Naive thymus-derived CD4-positive, alpha-beta T cell (primary cell): ENCODE measurements at regions of chr6 and their contacts with region 1.

Region 1: GRCh38 chr6:15491255-15491985 is 171.4 kb downstream of the DTNBP1 start:
- DNase-seq: peak; percentile 48 to 77 (median 70)
- ATAC-seq: peak; percentile 88
- H3K4me3 ChIP-seq: no peak overlapping the region
- H3K4me3 Mint-ChIP-seq: peak overlapping the region in 6 of 10 donors; percentile 2 to 17 (median 3)
- H3K27ac ChIP-seq: peak overlapping the region; percentile 2
- H3K27ac Mint-ChIP-seq: peak overlapping the region; percentile 29 to 88 (median 67)
- H3K4me1 ChIP-seq: peaks cover 0 to 11% of the 10 kb centered on the region in 2 donors
- H3K4me1 Mint-ChIP-seq: peaks cover 24 to 58% (median 41%) of the 10 kb centered on the region in 7 donors
- H3K27me3 ChIP-seq: no peaks in the 10 kb centered on the region
- H3K27me3 Mint-ChIP-seq: no peaks in the 10 kb centered on the region

Region 2: DNA sequence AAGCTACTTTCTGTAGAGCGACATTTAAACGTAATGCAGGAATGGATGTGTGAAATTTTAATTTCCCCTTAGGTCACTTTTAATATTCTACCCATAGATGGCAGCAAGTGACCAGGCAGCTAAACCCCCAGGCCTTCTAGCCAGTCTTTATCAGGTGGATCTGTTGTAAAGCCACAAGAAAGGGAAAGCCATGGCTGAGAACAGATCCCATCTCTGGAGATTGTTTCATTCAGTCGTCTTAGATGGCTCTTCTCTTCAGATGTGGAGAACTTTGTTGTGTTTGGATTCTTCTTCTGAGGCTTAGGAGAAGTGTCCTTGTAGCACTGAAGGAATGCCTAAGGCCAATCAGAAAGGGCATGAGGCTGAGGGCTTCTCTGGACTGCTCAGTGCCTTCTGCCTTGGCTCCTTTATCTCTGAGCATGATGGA is 1582.5 kb before region 1 on chr6:
- CTCF ChIA-PET with region 1: no interaction called
- POLR2A ChIA-PET with region 1: no interaction called
- intact Hi-C with region 1: loop called in 1 of 2 experiments (anchors 1 kb)
- DNase-seq: peak in 7 of 9 donors; percentile 22 to 56 (median 36)
- ATAC-seq: peak; percentile 92
- H3K4me3 ChIP-seq: no peak overlapping the region
- H3K4me3 Mint-ChIP-seq: no peak overlapping the region
- H3K27ac ChIP-seq: no peak overlapping the region
- H3K27ac Mint-ChIP-seq: no peak overlapping the region
- H3K4me1 ChIP-seq: peaks cover 0 to 5% of the 10 kb centered on the region in 2 donors
- H3K4me1 Mint-ChIP-seq: peaks cover 0 to 8% (median 3%) of the 10 kb centered on the region in 7 donors
- H3K27me3 ChIP-seq: no peaks in the 10 kb centered on the region
- H3K27me3 Mint-ChIP-seq: peaks cover 24 to 51% (median 39%) of the 10 kb centered on the region in 5 donors

Region 3: GRCh38 chr6:14129575-14129974 is 1361.8 kb before region 1 on chr6:
- CTCF ChIA-PET with region 1: interaction called, 8 read pairs
- POLR2A ChIA-PET with region 1: no interaction called
- intact Hi-C with region 1: loop called in 1 of 2 experiments (anchors 1 kb)
- DNase-seq: peak in 5 of 9 donors; percentile 28 to 57 (median 45)
- ATAC-seq: peak; percentile 55
- H3K4me3 ChIP-seq: no peak overlapping the region
- H3K4me3 Mint-ChIP-seq: no peak overlapping the region
- H3K27ac ChIP-seq: no peak overlapping the region
- H3K27ac Mint-ChIP-seq: peak overlapping the region in 2 of 9 donors; percentile 12 to 51
- H3K4me1 ChIP-seq: no peaks in the 10 kb centered on the region
- H3K4me1 Mint-ChIP-seq: peaks cover 2 to 21% (median 11%) of the 10 kb centered on the region in 7 donors
- H3K27me3 ChIP-seq: no peaks in the 10 kb centered on the region
- H3K27me3 Mint-ChIP-seq: no peaks in the 10 kb centered on the region

Region 4: GRCh38 chr6:15621203-15622044 is 130.0 kb after region 1 on chr6:
- CTCF ChIA-PET with region 1: interaction called, 3 read pairs
- POLR2A ChIA-PET with region 1: no interaction called
- intact Hi-C with region 1: loop called (anchors 1 kb)
- DNase-seq: peak in 1 of 9 donors; percentile 34
- ATAC-seq: peak; percentile 86
- H3K4me3 ChIP-seq: no peak overlapping the region
- H3K4me3 Mint-ChIP-seq: peak overlapping the region in 1 of 10 donors; percentile 5
- H3K27ac ChIP-seq: no peak overlapping the region
- H3K27ac Mint-ChIP-seq: peak overlapping the region in 2 of 9 donors; percentile 3 to 52
- H3K4me1 ChIP-seq: no peaks in the 10 kb centered on the region
- H3K4me1 Mint-ChIP-seq: peaks cover 19 to 55% (median 42%) of the 10 kb centered on the region in 7 donors
- H3K27me3 ChIP-seq: no peaks in the 10 kb centered on the region
- H3K27me3 Mint-ChIP-seq: no peaks in the 10 kb centered on the region

Region 5: DNA sequence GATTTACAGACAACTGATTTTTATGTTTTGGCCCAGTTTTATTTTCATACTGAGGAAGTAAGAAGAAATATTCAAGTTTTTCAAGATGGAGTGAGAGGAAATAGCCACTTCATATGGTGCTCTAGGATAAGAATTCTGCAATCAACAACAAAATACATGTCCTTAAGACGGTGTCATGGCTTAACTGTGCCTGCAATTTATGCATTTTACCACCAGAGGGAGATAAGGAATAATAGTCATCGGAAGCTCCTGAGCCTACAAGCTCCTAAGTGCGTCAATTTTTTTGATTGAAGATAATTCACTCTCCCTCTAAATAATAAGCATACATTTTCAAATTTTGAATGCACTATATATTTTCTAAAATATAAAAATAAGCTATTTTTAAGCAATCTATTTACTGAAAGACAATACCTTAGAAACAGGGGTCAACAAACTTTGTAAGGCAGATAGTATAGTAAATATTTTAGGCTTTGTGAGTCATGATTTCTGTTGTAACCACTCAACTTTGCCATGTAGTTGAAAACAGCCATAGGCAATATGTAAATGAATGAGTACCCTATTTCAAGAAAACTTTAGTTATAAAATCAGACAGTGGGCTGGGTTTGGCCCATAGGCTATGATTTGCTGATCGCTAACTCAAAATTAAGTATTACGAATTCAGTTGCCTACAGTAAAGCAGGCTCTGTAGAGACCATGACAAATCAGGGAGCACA is 402.3 kb after region 1 on chr6:
- CTCF ChIA-PET with region 1: no interaction called
- POLR2A ChIA-PET with region 1: no interaction called
- intact Hi-C with region 1: no loop called
- DNase-seq: peak in 1 of 9 donors; percentile 5
- ATAC-seq: no peak
- H3K4me3 ChIP-seq: no peak overlapping the region
- H3K4me3 Mint-ChIP-seq: no peak overlapping the region
- H3K27ac ChIP-seq: no peak overlapping the region
- H3K27ac Mint-ChIP-seq: no peak overlapping the region
- H3K4me1 ChIP-seq: no peaks in the 10 kb centered on the region
- H3K4me1 Mint-ChIP-seq: peaks cover 0 to 2% (median 0%) of the 10 kb centered on the region in 7 donors
- H3K27me3 ChIP-seq: no peaks in the 10 kb centered on the region
- H3K27me3 Mint-ChIP-seq: peaks cover 0 to 7% (median 5%) of the 10 kb centered on the region in 5 donors

Region 6: GRCh38 chr6:16206595-16207037 is 715.2 kb after region 1 on chr6:
- CTCF ChIA-PET with region 1: interaction called, 3 read pairs
- POLR2A ChIA-PET with region 1: no interaction called
- intact Hi-C with region 1: loop called in 1 of 2 experiments (anchors 5 kb)
- DNase-seq: peak in 7 of 9 donors; percentile 19 to 63 (median 54)
- ATAC-seq: peak; percentile 86
- H3K4me3 ChIP-seq: no peak overlapping the region
- H3K4me3 Mint-ChIP-seq: no peak overlapping the region
- H3K27ac ChIP-seq: no peak overlapping the region
- H3K27ac Mint-ChIP-seq: peak overlapping the region in 1 of 9 donors; percentile 48
- H3K4me1 ChIP-seq: no peaks in the 10 kb centered on the region
- H3K4me1 Mint-ChIP-seq: peaks cover 0 to 6% (median 0%) of the 10 kb centered on the region in 7 donors
- H3K27me3 ChIP-seq: no peaks in the 10 kb centered on the region
- H3K27me3 Mint-ChIP-seq: peaks cover 5 to 25% (median 19%) of the 10 kb centered on the region in 5 donors